MCF 10A (cell line): ENCODE measurements at regions of chr3 and their contacts with region 1.

Region 1: DNA sequence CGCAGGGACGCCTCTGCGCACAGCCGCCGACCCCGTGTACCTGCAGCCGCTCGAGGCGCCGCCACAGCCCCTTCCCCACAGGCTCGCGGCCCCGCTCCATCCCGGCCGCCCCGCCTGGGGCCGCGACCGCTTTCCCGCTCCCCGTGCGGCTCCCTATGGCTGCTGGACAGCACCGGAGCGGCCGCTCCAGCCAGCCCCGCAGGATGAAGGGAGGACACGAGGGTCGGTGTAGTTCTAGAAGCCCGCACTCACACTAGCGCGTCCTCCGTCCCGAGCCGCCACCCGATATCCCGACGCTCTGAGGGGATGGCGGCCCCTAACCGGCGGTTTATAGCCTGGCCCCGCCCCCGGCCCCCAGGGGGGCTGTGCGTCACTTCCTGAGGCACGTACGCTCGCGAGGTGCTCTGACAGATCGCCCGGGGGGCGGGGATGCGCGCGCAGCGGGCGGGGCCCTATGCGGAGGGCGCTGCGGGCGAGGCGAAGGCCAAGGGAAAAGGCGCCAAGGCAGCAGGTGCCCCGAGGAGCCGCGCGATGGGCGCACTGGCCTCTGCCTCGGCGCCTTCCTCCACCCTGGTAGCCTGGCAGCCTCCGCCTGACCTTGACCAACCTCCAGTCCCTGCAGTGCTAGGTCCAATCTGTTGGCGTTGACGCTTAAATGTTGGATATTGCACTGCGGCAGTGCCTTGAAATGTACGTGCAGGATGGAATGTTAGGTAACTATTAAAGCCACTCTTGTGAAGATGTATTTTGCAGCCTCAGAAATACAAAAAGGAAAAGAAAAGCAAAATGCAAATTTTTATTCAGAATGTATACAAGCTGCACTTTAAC is at the start of gene TFRC:
- DNase-seq: peak; percentile 92
- H3K4me3 Mint-ChIP-seq: peak within 1 kb of the TSS; percentile 94
- H3K27ac Mint-ChIP-seq: peak within 1 kb of the TSS; percentile 87
- H3K4me1 Mint-ChIP-seq: peaks cover 6% of the 10 kb centered on the region
- H3K27me3 Mint-ChIP-seq: no peaks in the 10 kb centered on the region
- CTCF ChIP-seq: no peak
- total RNA-seq, gene TFRC: 72.9 and 108 TPM in 2 replicates

Region 2: DNA sequence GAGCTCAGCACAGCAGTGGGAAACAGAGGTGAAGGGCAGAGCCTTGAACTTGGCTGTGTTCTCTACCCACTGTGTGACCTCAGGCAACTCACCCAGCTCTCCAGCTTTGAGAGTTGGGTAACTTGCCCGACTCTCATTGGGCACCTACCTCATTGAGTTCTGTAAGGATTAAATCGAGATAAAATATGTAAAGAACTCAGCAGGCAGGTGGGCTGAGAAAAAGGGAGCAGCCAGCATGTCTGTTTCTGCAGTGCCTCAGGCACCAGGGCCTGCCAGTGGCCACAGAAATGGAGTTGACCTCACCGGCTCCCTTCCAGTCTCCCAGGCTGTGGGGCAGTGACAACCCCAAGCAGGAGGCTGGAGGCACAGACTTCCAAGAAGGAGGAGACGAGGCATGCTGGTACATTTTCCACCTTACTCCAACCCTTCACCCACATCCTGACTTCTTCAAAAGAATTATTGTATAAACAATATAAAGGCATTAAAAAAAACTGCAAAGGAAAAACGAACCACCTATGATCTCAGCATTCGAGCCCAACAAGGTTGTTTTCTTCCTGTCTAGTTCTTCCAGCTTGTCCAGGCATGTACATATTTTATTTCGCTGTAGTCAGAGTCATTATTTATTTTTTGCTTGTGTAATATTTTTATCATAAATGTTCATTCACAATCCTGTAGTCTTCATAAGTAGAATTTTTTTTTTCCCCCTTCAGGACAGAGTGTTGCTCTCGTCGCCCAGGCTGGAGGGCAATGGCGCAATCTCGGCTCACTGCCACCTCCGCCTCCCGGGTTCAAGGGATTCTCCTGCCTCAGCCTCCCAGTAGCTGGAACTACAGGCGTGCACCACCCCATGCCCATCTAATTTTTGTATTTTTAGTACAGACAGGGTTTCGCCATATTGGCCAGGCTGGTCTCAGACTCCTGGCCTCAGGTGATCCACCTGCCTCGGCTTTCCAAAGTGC is 54.3 kb after region 1 on chr3:
- CTCF ChIA-PET with region 1: interaction called, 3 read pairs
- POLR2A ChIA-PET with region 1: interaction called, 70 read pairs
- intact Hi-C with region 1: no loop called
- DNase-seq: peak; percentile 91
- H3K4me3 Mint-ChIP-seq: peak overlapping the region; percentile 58
- H3K27ac Mint-ChIP-seq: peak overlapping the region; percentile 89
- H3K4me1 Mint-ChIP-seq: peaks cover 29% of the 10 kb centered on the region
- H3K27me3 Mint-ChIP-seq: no peaks in the 10 kb centered on the region
- CTCF ChIP-seq: no peak

Region 3: DNA sequence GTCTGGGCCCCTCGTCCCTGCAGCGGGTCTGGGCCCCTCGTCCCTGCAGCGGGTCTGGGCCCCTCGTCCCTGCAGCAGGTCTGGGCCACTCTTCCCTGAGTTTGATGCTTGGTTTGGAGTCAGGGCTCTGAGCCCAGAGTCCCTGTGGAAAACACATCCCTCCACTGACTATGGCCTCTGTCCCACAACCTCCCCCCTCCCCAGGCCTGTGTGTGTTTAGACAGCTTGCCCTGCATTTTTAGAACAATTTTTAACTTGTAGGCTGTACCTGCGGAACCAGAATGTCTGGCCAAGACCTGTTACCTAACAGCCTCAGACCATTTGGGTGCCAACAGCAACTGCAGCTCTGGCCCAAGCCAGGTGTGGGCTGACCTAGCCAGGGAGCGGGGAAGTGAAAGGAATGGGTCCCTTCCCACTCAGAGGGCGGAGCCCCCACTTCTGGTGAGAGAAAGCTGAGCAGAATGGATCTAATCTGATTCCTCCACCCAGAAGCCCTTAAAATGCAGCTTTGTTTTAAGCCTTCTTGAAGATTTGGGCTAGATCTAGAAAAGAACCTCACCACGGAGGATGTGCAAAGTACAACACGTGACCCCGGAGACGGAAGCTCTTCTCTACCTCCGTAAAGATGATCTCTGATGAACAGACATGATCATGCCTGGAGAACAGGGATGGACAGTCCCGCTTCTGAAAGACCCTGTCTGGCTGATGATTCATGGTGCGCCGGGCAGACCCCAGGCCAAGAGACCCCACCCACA is 60.4 kb after region 1 on chr3:
- CTCF ChIA-PET with region 1: interaction called, 3 read pairs
- POLR2A ChIA-PET with region 1: interaction called, 70 read pairs
- intact Hi-C with region 1: loop called (anchors 2 kb)
- DNase-seq: peak; percentile 70
- H3K4me3 Mint-ChIP-seq: peak overlapping the region; percentile 54
- H3K27ac Mint-ChIP-seq: no peak overlapping the region
- H3K4me1 Mint-ChIP-seq: peaks cover 43% of the 10 kb centered on the region
- H3K27me3 Mint-ChIP-seq: no peaks in the 10 kb centered on the region
- CTCF ChIP-seq: no peak